AG04450 (cell line): ENCODE measurements at regions of chr2 and their contacts with region 1.

Region 1: GRCh38 chr2:53670331-53670730 is 97.3 kb upstream of the CHAC2 start:
- DNase-seq: no peak
- H3K4me3 ChIP-seq: no peak overlapping the region
- H3K27ac ChIP-seq: no peak overlapping the region
- H3K27me3 ChIP-seq: no peaks in the 10 kb centered on the region
- CTCF ChIP-seq: no peak

Region 2: DNA sequence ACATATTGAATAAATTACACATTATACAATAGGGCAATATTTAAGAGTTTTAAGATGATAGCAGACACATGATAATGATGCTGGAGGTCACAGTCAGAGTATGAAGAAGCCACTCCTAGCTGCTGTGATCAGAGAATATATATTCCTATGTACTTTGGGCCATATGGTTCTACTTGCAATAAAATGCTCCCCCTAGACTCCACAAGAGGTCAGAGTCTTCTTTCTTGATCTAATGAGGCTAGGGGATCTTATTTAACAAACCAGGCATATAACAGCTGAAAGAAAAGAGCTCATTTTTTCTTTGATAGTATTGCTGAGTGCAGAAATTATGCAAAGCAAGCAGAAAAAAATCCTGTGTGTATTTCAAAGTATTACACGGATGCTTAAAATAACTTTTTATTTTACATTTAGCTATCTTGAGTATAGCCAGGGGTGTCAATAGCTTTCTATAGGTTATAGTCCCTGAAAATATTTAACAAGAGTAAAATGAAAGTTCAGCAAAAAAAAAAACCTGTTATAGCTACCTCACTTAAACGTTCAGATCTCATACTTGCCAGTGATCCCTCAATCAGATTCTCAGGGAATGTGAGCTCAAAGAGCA is 651.4 kb before region 1 on chr2:
- CTCF ChIA-PET with region 1: no interaction called
- POLR2A ChIA-PET with region 1: no interaction called
- DNase-seq: no peak
- H3K4me3 ChIP-seq: no peak overlapping the region
- H3K27ac ChIP-seq: no peak overlapping the region
- H3K27me3 ChIP-seq: no peaks in the 10 kb centered on the region
- CTCF ChIP-seq: peak; percentile 51

Region 3: DNA sequence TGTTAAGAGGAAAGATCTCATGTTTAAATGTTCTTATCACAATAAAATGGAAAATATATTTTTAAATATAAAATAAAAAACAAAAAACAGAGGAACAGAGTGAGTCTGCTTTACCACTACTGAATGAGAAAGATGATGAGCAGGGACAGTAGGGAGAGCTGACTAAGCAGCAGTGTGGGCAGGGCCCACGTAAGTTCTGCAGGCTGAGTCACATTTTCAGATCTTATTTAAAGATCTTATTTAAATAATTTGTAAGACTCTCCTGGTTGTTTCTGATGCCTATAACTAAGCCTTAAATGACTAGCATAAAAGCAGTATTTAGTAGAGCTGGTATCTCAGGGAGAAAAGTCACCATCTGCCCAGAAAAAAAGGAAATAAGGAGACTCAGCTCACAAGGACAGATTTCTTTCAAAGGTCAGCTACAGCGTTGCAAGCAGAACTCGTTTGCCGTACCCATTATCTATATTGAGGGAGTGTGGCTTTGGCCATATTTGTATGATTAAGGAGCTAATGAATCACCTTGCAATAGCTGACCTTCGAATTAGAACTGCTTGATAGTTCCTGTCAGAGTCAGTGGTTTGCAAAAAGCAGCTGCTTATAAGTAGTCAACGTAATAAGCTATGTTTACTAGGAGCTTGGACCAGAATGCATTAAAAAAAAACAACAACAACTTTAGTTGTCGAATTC is 224.8 kb before region 1 on chr2:
- CTCF ChIA-PET with region 1: no interaction called
- POLR2A ChIA-PET with region 1: no interaction called
- DNase-seq: peak; percentile 26
- H3K4me3 ChIP-seq: no peak overlapping the region; the same call in 1 of the 2 replicates
- H3K27ac ChIP-seq: no peak overlapping the region
- H3K27me3 ChIP-seq: no peaks in the 10 kb centered on the region
- CTCF ChIP-seq: no peak

Region 4: GRCh38 chr2:53508667-53509066 is 161.7 kb before region 1 on chr2:
- CTCF ChIA-PET with region 1: no interaction called
- POLR2A ChIA-PET with region 1: no interaction called
- DNase-seq: no peak
- H3K4me3 ChIP-seq: no peak overlapping the region
- H3K27ac ChIP-seq: no peak overlapping the region
- H3K27me3 ChIP-seq: no peaks in the 10 kb centered on the region
- CTCF ChIP-seq: no peak

Region 5: DNA sequence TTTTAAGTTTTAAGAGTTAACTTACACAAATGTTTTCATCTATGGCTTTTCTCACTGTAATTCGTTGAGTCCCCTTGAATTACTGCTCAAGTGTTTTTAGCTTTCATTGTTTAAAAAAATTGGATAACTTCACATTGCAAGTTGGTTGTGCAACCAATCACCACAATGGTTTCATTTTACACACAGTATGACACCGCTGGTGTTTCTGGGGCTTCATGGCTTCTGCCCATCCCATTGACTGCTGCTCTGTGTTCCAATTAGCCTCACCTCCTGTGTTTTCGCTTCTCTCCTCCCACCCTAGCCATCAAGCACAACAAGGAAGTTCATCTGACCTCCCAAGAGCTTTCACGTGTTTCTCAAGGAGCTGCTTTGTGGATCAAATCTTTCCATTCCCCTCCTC is 101.9 kb before region 1 on chr2:
- CTCF ChIA-PET with region 1: no interaction called
- POLR2A ChIA-PET with region 1: no interaction called
- DNase-seq: no peak
- H3K4me3 ChIP-seq: peak overlapping the region; percentile 4; the same call in 1 of the 2 replicates
- H3K27ac ChIP-seq: no peak overlapping the region
- H3K27me3 ChIP-seq: no peaks in the 10 kb centered on the region
- CTCF ChIP-seq: no peak

Region 6: GRCh38 chr2:53690876-53691275 is 20.5 kb after region 1 on chr2:
- CTCF ChIA-PET with region 1: interaction called, 13 read pairs
- POLR2A ChIA-PET with region 1: no interaction called
- DNase-seq: no peak
- H3K4me3 ChIP-seq: no peak overlapping the region
- H3K27ac ChIP-seq: no peak overlapping the region
- H3K27me3 ChIP-seq: no peaks in the 10 kb centered on the region
- CTCF ChIP-seq: no peak